ENCODE measurements at regions of chr15 and their contacts with region 1.

Region 1: DNA sequence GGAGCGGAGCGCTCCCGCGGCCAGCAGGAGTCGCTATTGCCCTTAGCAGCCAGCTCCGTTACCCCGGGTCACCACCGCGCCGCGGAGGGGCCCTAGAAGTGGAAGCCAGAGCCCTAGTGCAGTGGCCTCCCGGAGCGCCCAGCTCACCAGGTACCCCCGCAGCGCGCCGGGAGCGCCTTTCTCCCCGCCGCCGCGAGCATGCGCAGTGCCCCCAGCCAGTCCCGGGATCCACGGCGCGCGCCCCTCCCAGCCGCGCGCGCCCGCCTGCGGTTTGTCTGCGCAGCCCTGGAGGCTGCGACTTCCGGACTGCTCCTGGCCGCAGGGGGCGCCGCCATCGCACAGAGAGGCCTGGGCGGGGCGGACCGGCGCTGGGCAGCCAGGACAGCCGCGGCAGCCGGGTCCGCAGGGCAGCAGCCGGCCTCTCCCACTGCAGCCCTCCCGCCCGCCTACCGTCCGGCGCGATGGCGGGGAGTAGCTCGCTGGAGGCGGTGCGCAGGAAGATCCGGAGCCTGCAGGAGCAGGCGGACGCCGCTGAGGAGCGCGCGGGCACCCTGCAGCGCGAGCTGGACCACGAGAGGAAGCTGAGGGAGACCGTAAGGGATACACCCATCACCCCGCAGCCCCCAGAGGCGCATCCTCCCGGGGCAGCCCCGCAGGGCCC is 5.7 kb downstream of the TPM1 start:
- DNase-seq: peak; percentile 89
- H3K4me3 ChIP-seq: peak overlapping the region; percentile 58 to 65 (median 59)
- H3K27ac ChIP-seq: peak overlapping the region; percentile 69
- H3K4me1 ChIP-seq: peaks cover 58% of the 10 kb centered on the region
- H3K27me3 ChIP-seq: no peaks in the 10 kb centered on the region
- CTCF ChIP-seq: peak; percentile 66 to 97

Region 2: GRCh38 chr15:62758126-62758951 is 289.9 kb before region 1 on chr15:
- CTCF ChIA-PET with region 1: no interaction called
- dilution Hi-C with region 1: no loop called
- in situ Hi-C with region 1: no loop called
- intact Hi-C with region 1: loop called (anchors 10 kb)
- DNase-seq: peak; percentile 89
- H3K4me3 ChIP-seq: peak overlapping the region; percentile 3 to 21 (median 5)
- H3K27ac ChIP-seq: peak overlapping the region; percentile 75
- H3K4me1 ChIP-seq: peaks cover 43% of the 10 kb centered on the region
- H3K27me3 ChIP-seq: no peaks in the 10 kb centered on the region
- CTCF ChIP-seq: no peak

Region 3: GRCh38 chr15:62847900-62848489 is 200.2 kb before region 1 on chr15:
- CTCF ChIA-PET with region 1: interaction called, 3 read pairs
- dilution Hi-C with region 1: no loop called
- in situ Hi-C with region 1: loop called (anchors 10 to 25 kb)
- intact Hi-C with region 1: loop called (anchors 2 kb)
- DNase-seq: peak; percentile 48
- H3K4me3 ChIP-seq: no peak overlapping the region
- H3K27ac ChIP-seq: no peak overlapping the region
- H3K4me1 ChIP-seq: peaks cover 23% of the 10 kb centered on the region
- H3K27me3 ChIP-seq: no peaks in the 10 kb centered on the region
- CTCF ChIP-seq: peak; percentile 71 to 81

Region 4: DNA sequence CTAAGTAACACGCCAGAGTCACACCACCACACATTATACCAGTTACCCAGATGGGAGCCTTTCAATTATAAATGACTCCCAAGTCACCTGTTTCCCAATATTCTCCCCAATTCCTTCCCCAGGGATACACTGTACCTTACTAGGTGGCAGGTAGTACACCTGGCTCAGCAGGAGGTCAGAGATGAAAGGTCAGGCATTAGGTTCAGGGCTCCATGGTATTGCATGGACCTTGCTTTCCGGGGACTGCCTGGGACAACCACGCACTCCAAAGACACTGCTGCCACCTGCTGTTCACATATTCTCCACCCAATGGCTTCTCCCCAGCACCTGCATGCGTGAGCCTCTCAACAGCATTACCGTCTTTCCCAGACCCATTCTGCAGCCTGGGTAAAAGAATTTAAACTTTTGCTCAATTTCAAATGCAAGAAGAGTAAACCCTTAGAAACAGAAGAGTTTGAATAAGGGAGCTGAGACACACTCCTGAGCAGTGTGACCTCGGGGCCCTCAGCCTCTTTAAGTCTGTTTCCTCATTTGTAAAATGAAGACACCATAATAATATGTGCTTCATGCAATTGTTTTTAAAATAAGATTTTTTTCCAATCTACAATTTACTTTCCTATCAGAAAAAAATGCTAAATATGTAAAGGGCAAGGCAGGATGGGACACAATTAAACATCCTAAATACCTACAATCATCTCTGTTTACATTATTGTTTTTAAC is 45.4 kb after region 1 on chr15:
- CTCF ChIA-PET with region 1: no interaction called
- dilution Hi-C with region 1: no loop called
- in situ Hi-C with region 1: no loop called
- intact Hi-C with region 1: loop called (anchors 1 kb)
- DNase-seq: peak; percentile 60
- H3K4me3 ChIP-seq: no peak overlapping the region
- H3K27ac ChIP-seq: no peak overlapping the region
- H3K4me1 ChIP-seq: peaks cover 9% of the 10 kb centered on the region
- H3K27me3 ChIP-seq: no peaks in the 10 kb centered on the region
- CTCF ChIP-seq: peak; percentile 77 to 96

Region 5: DNA sequence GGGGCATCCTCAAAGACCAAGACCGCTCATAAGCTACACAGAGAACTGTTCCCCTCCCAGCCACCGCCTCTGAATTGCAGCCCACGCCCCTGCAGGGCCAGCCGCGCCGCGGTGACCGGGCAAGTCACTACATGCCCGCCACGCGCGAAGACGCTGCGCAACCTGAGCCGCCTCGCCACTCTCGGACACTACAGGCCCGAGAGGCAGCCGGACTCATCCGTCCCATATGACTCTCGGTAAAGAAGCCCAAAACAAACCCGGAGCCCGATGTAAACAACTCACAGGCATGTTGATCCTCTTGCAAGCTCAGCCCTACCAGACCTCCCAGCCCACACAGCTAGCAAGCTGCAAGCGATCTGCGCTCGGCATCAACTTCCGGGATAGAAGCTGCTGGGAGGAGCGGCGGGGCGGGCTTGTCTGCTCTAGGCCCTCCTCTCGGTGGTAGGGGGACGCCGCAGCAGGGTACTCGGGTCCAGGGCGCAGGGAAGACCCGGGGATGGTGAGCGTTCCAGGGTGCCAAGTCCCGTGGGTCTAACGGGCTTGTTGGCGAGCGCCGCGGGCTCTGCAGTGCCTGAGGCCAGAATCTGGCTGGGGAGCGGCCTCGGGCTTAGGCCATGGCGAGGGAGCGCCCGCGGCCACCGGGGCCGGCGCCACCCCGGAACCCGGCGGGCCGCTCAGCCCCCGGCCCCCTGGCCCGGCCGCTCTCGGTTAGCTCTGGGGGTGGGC is 109.0 kb after region 1 on chr15 and contains the start of gene RPS27L:
- CTCF ChIA-PET with region 1: no interaction called
- dilution Hi-C with region 1: no loop called
- in situ Hi-C with region 1: no loop called
- intact Hi-C with region 1: loop called (anchors 2 kb)
- DNase-seq: peak; percentile 92
- H3K4me3 ChIP-seq: peak within 1 kb of the TSS; percentile 89 to 93 (median 91)
- H3K27ac ChIP-seq: peak within 1 kb of the TSS; percentile 95
- H3K4me1 ChIP-seq: peaks cover 3% of the 10 kb centered on the region
- H3K27me3 ChIP-seq: no peaks in the 10 kb centered on the region
- CTCF ChIP-seq: no peak
- total RNA-seq, gene RPS27L: 40.5 to 141 TPM

Region 6: GRCh38 chr15:63402498-63403253 is 354.4 kb after region 1 on chr15:
- CTCF ChIA-PET with region 1: no interaction called
- dilution Hi-C with region 1: no loop called
- in situ Hi-C with region 1: no loop called
- intact Hi-C with region 1: loop called (anchors 5 kb)
- DNase-seq: peak; percentile 24
- H3K4me3 ChIP-seq: no peak overlapping the region
- H3K27ac ChIP-seq: no peak overlapping the region
- H3K4me1 ChIP-seq: peaks cover 10% of the 10 kb centered on the region
- H3K27me3 ChIP-seq: no peaks in the 10 kb centered on the region
- CTCF ChIP-seq: peak; percentile 60 to 62

Region 7: GRCh38 chr15:63514531-63514943 is 466.3 kb after region 1 on chr15:
- CTCF ChIA-PET with region 1: no interaction called
- dilution Hi-C with region 1: no loop called
- in situ Hi-C with region 1: no loop called
- intact Hi-C with region 1: no loop called
- DNase-seq: peak; percentile 79
- H3K4me3 ChIP-seq: no peak overlapping the region
- H3K27ac ChIP-seq: peak overlapping the region; percentile 63
- H3K4me1 ChIP-seq: peaks cover 45% of the 10 kb centered on the region
- H3K27me3 ChIP-seq: no peaks in the 10 kb centered on the region
- CTCF ChIP-seq: no peak